Transverse colon (tissue), 4 donors: ENCODE measurements at regions of chr20 and their contacts with region 1.

Region 1: DNA sequence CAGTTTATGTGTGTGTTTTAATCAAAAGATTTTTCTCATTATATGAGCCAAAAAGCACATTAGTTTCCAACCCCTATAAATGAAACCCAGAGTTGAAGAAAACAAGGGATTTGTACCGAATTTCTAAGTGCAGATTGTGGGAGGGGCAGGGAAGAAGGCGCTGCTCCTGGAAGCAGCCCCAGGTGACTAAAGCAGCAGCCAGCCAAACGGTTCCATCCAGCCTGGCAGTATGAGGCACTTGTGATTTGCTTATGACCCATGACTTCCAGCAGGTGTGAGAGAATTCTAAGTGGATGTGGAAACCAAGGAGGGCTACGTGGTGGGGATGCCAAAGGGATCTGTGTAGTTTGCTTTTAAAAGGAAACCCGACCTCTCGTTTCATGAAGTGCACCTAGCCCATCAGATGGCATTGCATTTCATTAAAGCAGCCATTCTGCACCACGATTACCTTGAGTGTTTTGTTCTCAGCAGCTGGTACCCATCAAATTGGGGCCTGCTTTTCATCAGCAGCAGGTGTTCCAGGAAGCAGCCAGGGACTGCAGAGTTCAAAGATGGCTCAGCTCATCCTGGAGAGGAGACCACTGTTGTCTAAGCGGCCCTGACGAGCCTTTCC is 79.1 kb downstream of the DTD1 start:
- DNase-seq: no peak
- H3K4me3 ChIP-seq: no peak overlapping the region
- H3K27ac ChIP-seq: peak overlapping the region in 1 of 4 donors; percentile 4
- H3K4me1 ChIP-seq: no peaks in the 10 kb centered on the region
- H3K27me3 ChIP-seq: no peaks in the 10 kb centered on the region
- CTCF ChIP-seq: no peak
- EP300 ChIP-seq: no peak
- POLR2A ChIP-seq: no peak

Region 2: GRCh38 chr20:17262786-17263185 is 1404.1 kb before region 1 on chr20:
- in situ Hi-C with region 1: no loop called
- intact Hi-C with region 1: loop called (anchors 5 kb)
- DNase-seq: no peak
- H3K4me3 ChIP-seq: no peak overlapping the region
- H3K27ac ChIP-seq: no peak overlapping the region
- H3K4me1 ChIP-seq: no peaks in the 10 kb centered on the region
- H3K27me3 ChIP-seq: no peaks in the 10 kb centered on the region
- CTCF ChIP-seq: no peak
- EP300 ChIP-seq: no peak
- POLR2A ChIP-seq: no peak